ENCODE measurements at regions of chr10 and their contacts with region 1.

Region 1: DNA sequence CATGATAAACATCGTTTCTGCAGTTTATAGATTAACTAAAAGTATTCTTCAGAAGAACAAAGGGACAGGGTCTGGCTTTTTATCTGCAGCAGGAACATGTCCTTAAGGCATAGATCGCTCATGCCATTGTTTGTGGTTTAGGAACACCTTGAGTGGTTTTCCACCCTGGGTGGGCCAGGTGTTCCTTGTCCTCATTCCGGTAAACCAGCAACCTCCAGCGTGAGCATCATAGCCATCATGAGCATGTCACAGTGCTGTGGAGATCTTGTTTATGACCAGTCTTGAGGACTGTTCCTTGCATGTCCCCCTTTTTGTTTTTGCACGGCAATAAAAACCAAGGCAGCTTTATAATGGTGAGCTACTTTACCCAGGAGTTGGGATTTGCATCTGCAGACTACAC is 33.9 kb downstream of the STOX1 start:
- DNase-seq: no peak
- H3K4me3 ChIP-seq: no peak overlapping the region
- H3K27ac ChIP-seq: no peak overlapping the region
- H3K4me1 ChIP-seq: no peaks in the 10 kb centered on the region
- H3K27me3 ChIP-seq: no peaks in the 10 kb centered on the region
- CTCF ChIP-seq: no peak
- EP300 ChIP-seq: no peak
- POLR2A ChIP-seq: no peak

Region 2: DNA sequence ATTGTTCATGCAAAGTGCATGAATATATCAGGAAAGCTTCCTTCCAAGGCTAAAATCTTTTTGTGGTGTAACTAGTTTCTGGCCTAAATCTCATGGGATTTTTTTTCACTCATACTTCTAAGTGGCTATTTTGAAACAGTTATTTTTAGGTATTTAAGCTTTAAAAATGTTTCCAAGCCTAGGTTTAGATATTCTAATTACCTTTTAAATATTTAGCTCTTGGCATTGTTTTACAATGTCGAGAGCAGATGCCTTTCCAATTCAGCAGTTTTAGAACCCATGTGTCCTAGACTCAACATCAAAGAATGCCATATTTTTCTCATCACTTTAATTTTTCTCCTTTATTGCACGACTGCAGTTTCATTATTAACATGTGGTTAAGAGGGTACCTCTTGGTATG is 61.1 kb before region 1 on chr10:
- in situ Hi-C with region 1: no loop called
- intact Hi-C with region 1: loop called (anchors 2 kb)
- DNase-seq: no peak
- H3K4me3 ChIP-seq: no peak overlapping the region
- H3K27ac ChIP-seq: no peak overlapping the region
- H3K4me1 ChIP-seq: no peaks in the 10 kb centered on the region
- H3K27me3 ChIP-seq: no peaks in the 10 kb centered on the region
- CTCF ChIP-seq: no peak
- EP300 ChIP-seq: no peak
- POLR2A ChIP-seq: no peak

Measured in transverse colon (tissue), 4 donors.